ENCODE measurements at regions of chr17 and their contacts with region 1.

Region 1: GRCh38 chr17:59837308-59838051 is 55.3 kb downstream of the TUBD1 start:
- DNase-seq: peak; percentile 88
- ATAC-seq: peak; percentile 90
- H3K4me3 ChIP-seq: peak overlapping the region; percentile 31 to 62 (median 50)
- H3K4me3 Mint-ChIP-seq: peak overlapping the region; percentile 92
- H3K27ac ChIP-seq: peak overlapping the region; percentile 85 to 90
- H3K27ac Mint-ChIP-seq: peak overlapping the region; percentile 97
- H3K4me1 ChIP-seq: peaks cover 33 to 45% of the 10 kb centered on the region in 2 donors
- H3K4me1 Mint-ChIP-seq: peaks cover 65% of the 10 kb centered on the region
- H3K27me3 ChIP-seq: no peaks in the 10 kb centered on the region
- H3K27me3 Mint-ChIP-seq: no peaks in the 10 kb centered on the region
- CTCF ChIP-seq: no peak

Region 2: GRCh38 chr17:59853168-59853918 is 15.9 kb after region 1 on chr17:
- CTCF ChIA-PET with region 1: interaction called, 22 read pairs
- POLR2A ChIA-PET with region 1: interaction called, 24 read pairs
- intact Hi-C with region 1: no loop called
- DNase-seq: peak; percentile 60
- ATAC-seq: peak; percentile 82
- H3K4me3 ChIP-seq: no peak overlapping the region
- H3K4me3 Mint-ChIP-seq: no peak overlapping the region
- H3K27ac ChIP-seq: no peak overlapping the region
- H3K27ac Mint-ChIP-seq: peak overlapping the region; percentile 78
- H3K4me1 ChIP-seq: peaks cover 11 to 19% of the 10 kb centered on the region in 2 donors
- H3K4me1 Mint-ChIP-seq: peaks cover 20% of the 10 kb centered on the region
- H3K27me3 ChIP-seq: no peaks in the 10 kb centered on the region
- H3K27me3 Mint-ChIP-seq: no peaks in the 10 kb centered on the region
- CTCF ChIP-seq: peak; percentile 26

Region 3: GRCh38 chr17:59918975-59919530 is 81.6 kb after region 1 on chr17:
- CTCF ChIA-PET with region 1: no interaction called
- POLR2A ChIA-PET with region 1: no interaction called
- intact Hi-C with region 1: no loop called
- DNase-seq: no peak
- ATAC-seq: no peak
- H3K4me3 ChIP-seq: no peak overlapping the region
- H3K4me3 Mint-ChIP-seq: no peak overlapping the region
- H3K27ac ChIP-seq: no peak overlapping the region
- H3K27ac Mint-ChIP-seq: no peak overlapping the region
- H3K4me1 ChIP-seq: no peaks in the 10 kb centered on the region
- H3K4me1 Mint-ChIP-seq: no peaks in the 10 kb centered on the region
- H3K27me3 ChIP-seq: no peaks in the 10 kb centered on the region
- H3K27me3 Mint-ChIP-seq: no peaks in the 10 kb centered on the region
- CTCF ChIP-seq: no peak

Measured in B cell (primary cell).